ENCODE measurements at regions of chr4 and their contacts with region 1.

Region 1: GRCh38 chr4:186587416-186588018 is 32.1 kb upstream of the MTNR1A start:
- DNase-seq: no peak
- H3K4me3 ChIP-seq: no peak overlapping the region
- H3K27ac ChIP-seq: no peak overlapping the region
- H3K4me1 ChIP-seq: no peaks in the 10 kb centered on the region
- H3K27me3 ChIP-seq: no peaks in the 10 kb centered on the region
- CTCF ChIP-seq: peak; percentile 73 to 94 (median 93)
- EP300 ChIP-seq: no peak
- POLR2A ChIP-seq: no peak

Region 2: GRCh38 chr4:186297013-186297645 is 290.4 kb before region 1 on chr4:
- intact Hi-C with region 1: loop called (anchors 2 kb)
- DNase-seq: no peak
- H3K4me3 ChIP-seq: no peak overlapping the region
- H3K27ac ChIP-seq: no peak overlapping the region
- H3K4me1 ChIP-seq: peaks cover 0 to 5% (median 0%) of the 10 kb centered on the region in 4 donors
- H3K27me3 ChIP-seq: peaks cover 0 to 25% (median 1%) of the 10 kb centered on the region in 4 donors
- CTCF ChIP-seq: peak; percentile 58 to 71 (median 71)
- EP300 ChIP-seq: no peak
- POLR2A ChIP-seq: no peak

Region 3: DNA sequence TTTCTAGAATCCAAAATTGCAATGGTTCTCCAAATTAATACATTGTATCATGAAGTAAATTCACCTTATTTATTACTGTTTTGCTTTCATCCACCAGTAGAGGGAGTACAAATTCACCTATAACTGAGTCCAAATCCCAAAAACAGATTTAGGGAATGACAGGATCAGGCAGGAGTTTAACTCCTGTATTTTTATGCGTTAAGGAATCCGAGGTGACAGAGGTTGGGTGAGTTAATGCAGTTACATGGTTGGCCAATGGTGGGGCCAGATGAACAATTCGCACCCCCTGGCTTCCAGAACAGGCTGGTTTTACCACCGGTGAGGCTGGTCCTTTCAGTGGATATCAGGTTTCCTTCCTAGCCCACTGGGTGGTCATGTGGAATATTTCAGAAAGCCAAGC is 114.6 kb before region 1 on chr4:
- intact Hi-C with region 1: loop called (anchors 5 kb)
- DNase-seq: peak; percentile 78
- H3K4me3 ChIP-seq: no peak overlapping the region
- H3K27ac ChIP-seq: no peak overlapping the region
- H3K4me1 ChIP-seq: no peaks in the 10 kb centered on the region
- H3K27me3 ChIP-seq: peaks cover 0 to 8% (median 0%) of the 10 kb centered on the region in 4 donors
- CTCF ChIP-seq: peak; percentile 36 to 57 (median 47)
- EP300 ChIP-seq: no peak
- POLR2A ChIP-seq: no peak

Region 4: GRCh38 chr4:186808635-186809018 is 221.1 kb after region 1 on chr4:
- intact Hi-C with region 1: no loop called
- DNase-seq: no peak
- H3K4me3 ChIP-seq: no peak overlapping the region
- H3K27ac ChIP-seq: no peak overlapping the region
- H3K4me1 ChIP-seq: no peaks in the 10 kb centered on the region
- H3K27me3 ChIP-seq: no peaks in the 10 kb centered on the region
- CTCF ChIP-seq: no peak
- EP300 ChIP-seq: no peak
- POLR2A ChIP-seq: no peak

Measured in esophagus muscularis mucosa (tissue), 4 donors.